SK-N-SH (cell line): ENCODE measurements at regions of chr19 and their contacts with region 1.

Region 1: GRCh38 chr19:46392243-46392801 is 21.0 kb downstream of the CCDC8 start:
- DNase-seq: no peak
- H3K4me3 ChIP-seq: no peak overlapping the region
- H3K27ac ChIP-seq: no peak overlapping the region
- H3K4me1 ChIP-seq: no peaks in the 10 kb centered on the region
- H3K27me3 ChIP-seq: no peaks in the 10 kb centered on the region
- CTCF ChIP-seq: no peak
- EP300 ChIP-seq: no peak
- RAD21 ChIP-seq: no peak

Region 2: DNA sequence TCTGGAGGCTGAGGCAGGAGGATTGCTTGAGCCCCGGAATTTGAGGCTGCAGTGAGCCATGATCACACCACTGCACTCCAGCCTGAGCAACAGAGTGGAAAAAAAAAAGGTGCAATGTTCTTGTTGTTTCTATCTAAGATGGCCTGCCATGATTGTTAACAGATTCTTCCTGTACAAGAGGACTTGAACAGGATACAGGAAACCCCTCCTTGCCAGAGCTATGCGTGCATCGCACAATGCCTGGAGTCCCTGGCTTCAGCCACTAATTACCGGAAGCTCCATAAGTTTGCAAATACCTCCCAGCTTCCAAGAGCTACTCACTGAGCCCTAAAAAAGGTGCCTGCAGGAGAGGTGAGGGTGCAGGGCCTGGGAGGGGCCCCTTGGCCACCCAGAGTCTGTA is 108.6 kb before region 1 on chr19:
- CTCF ChIA-PET with region 1: interaction called, 41 read pairs
- POLR2A ChIA-PET with region 1: no interaction called
- DNase-seq: no peak
- H3K4me3 ChIP-seq: no peak overlapping the region
- H3K27ac ChIP-seq: no peak overlapping the region
- H3K4me1 ChIP-seq: no peaks in the 10 kb centered on the region
- H3K27me3 ChIP-seq: no peaks in the 10 kb centered on the region; the same call in 1 of the 2 replicates
- CTCF ChIP-seq: no peak
- EP300 ChIP-seq: no peak
- RAD21 ChIP-seq: no peak

Region 3: DNA sequence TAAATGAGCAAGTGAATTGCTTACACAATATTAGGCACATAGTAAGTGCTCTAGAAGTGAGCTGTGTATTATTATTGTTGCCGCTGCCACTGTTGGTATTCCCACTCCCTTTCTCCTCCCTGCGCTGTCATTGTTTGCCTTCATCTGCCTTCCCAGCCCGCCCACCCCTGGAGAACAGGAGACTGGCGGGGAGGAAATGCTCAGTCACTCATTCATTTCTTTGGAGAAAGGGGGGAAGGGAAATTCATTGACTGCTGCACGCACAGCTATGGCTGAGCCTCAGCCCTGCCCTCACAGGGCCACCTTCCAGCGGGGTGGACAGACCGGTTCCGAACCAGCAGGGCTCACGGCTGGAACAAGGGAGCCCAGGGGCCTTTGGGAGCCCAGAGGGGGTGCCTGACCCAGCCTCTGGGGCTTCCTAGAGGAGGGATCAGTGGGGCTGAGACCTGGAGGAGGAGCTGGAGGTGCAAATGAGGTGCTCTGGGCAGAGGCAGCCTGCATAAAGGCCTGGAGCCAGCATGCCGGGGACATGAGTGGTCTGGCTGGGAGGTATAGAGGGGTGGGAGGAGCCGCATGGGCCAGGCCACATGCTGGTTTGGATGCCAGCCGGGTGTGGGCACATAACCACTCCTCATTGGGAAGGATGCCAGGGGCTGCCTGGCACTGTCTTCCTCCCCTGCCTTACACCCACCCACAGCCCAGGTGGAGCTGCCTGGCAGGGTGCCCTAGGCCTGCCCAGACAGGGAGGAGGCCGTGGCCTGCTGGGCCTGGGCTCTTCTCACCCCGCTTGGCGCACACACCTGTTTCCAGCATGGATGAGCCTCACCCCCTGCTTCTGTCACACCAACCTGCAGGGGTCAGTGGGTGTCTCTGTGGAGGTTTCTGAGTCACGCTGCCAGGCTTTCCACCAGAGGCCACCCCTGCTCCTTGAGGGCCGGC is 18.6 kb before region 1 on chr19:
- CTCF ChIA-PET with region 1: interaction called, 27 read pairs
- POLR2A ChIA-PET with region 1: no interaction called
- DNase-seq: peak; percentile 80
- H3K4me3 ChIP-seq: no peak overlapping the region
- H3K27ac ChIP-seq: peak overlapping the region; percentile 63 to 67
- H3K4me1 ChIP-seq: peaks cover 30 to 46% of the 10 kb centered on the region in 2 experiments
- H3K27me3 ChIP-seq: no peaks in the 10 kb centered on the region
- CTCF ChIP-seq: no peak
- EP300 ChIP-seq: peak in 1 of 2 experiments; percentile 39; a peak in 1 of 4 replicates
- RAD21 ChIP-seq: no peak

Region 4: DNA sequence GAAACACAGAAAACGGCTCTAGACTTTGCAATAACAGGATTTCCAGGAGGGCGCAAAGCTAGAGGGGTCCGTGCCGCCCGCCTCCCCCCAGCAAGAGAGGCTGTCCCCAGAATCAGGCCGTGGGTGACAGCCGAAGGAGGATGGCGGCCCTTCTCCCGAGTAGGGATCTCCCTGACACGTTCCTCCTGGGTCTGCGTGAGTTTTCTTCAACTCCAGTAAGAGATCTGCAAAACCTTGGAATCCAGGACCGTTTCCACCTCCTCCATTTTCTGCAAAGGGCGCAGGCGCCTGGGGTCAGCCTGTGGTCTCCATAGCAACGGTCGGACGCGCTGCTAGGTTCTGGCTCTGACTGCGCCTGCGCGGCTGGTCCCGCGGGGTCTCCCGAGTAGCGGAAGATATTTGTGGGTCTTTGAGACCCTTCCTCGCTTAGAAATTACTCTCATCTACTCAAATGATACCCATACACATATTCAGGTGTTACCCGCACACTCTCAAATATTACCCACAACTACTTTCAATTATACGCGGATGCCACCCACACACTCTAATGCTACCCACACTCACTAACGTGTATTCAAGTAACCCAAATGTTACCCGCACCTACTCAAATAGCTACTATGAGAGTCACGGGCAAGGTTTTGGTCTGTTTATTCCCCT is 34.3 kb after region 1 on chr19:
- CTCF ChIA-PET with region 1: interaction called, 16 read pairs
- POLR2A ChIA-PET with region 1: no interaction called
- DNase-seq: peak; percentile 94
- H3K4me3 ChIP-seq: peak overlapping the region; percentile 62 to 66
- H3K27ac ChIP-seq: peak overlapping the region in 1 of 2 experiments; percentile 12; a peak in 1 of 4 replicates
- H3K4me1 ChIP-seq: peaks cover 0 to 19% of the 10 kb centered on the region in 2 experiments; a peak in 2 of 4 replicates
- H3K27me3 ChIP-seq: no peaks in the 10 kb centered on the region
- CTCF ChIP-seq: no peak
- EP300 ChIP-seq: no peak
- RAD21 ChIP-seq: no peak

Region 5: GRCh38 chr19:46495787-46496101 is 103.4 kb after region 1 on chr19 and contains the start of gene PNMA8B:
- CTCF ChIA-PET with region 1: interaction called, 463 read pairs
- POLR2A ChIA-PET with region 1: no interaction called
- DNase-seq: peak; percentile 99
- H3K4me3 ChIP-seq: peak within 1 kb of the TSS; percentile 57 to 59
- H3K27ac ChIP-seq: peak within 1 kb of the TSS in 1 of 2 experiments; percentile 59; a peak in 1 of 4 replicates
- H3K4me1 ChIP-seq: peaks cover 0 to 16% of the 10 kb centered on the region in 2 experiments; a peak in 1 of 4 replicates
- H3K27me3 ChIP-seq: no peaks in the 10 kb centered on the region
- CTCF ChIP-seq: no peak
- EP300 ChIP-seq: no peak
- RAD21 ChIP-seq: no peak
- polyA plus RNA-seq, gene PNMA8B: 0.63 and 0.92 TPM in 2 replicates

Region 6: DNA sequence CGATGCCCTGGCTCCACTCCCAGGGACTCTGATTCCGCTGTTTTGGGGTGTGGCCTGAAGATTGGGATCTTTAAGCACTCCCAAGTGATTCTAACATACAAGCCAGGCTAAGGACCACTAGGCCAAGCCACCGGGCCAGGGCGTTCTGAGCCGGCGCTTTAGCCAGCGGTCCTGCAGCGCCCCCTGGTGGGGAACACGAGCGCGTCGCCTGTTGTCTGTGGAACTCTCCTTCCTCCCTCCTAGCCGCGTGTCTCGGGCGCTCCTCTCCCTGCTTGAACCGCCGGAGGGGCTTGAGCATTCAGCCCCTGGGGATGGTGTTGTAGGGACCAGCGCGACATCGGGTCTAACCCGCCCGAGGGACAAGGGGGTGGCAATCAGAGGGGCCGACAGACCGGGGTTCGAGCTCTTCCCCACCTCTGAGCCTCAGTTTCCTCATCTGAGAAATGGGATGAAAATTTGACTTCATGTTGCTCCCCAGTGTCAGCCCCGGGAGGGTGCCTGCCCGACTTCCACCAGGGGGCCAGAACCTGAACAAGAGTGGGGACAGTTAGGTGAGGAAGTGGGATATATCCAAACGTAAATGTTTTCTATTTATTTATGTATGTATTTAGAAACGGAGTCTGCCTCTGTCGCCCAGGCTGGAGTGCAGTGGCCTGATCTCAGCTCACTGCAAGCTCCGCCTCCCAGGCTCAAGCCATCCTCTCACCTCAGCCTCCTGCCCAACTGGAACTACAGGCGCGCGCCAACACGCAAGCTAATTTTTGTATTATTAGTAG is 121.3 kb after region 1 on chr19:
- CTCF ChIA-PET with region 1: interaction called, 134 read pairs
- POLR2A ChIA-PET with region 1: no interaction called
- DNase-seq: peak; percentile 87
- H3K4me3 ChIP-seq: peak overlapping the region in 1 of 2 experiments; percentile 40; a peak in 1 of 4 replicates
- H3K27ac ChIP-seq: no peak overlapping the region
- H3K4me1 ChIP-seq: no peaks in the 10 kb centered on the region
- H3K27me3 ChIP-seq: no peaks in the 10 kb centered on the region; the same call in 1 of the 2 replicates
- CTCF ChIP-seq: peak; percentile 92
- EP300 ChIP-seq: no peak
- RAD21 ChIP-seq: peak; percentile 94